Activated CD4-positive, alpha-beta memory T cell treated with anti-CD3 and anti-CD28 coated beads, Interleukin-2, amount 10 ng/mL, durations not matched to agents 7 days and 5 days (primary cell): ENCODE measurements at regions of chr10 and their contacts with region 1.

Region 1: DNA sequence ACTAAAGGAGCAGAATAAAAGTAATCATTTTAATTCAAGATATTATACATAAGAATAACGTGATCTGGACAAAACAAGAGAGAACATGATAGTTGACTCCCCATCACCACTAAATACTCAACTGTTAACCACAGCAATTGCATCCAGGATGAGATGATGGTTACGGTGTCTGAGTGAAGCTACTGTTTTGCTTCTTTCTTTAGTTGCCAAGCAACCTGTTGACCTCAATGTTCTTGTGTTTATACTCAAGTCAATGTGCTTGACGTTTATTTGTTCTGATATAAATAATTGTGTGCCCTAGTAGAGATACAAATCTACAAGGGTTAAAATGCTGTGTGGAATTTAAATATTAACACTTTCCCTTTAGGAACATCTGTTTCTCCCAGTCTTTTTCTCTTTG is 31.4 kb upstream of the MPP7 start:
- DNase-seq: peak; percentile 56
- H3K4me3 Mint-ChIP-seq: peak overlapping the region; percentile 81
- H3K27ac Mint-ChIP-seq: peak overlapping the region; percentile 94
- H3K4me1 Mint-ChIP-seq: peaks cover 52% of the 10 kb centered on the region
- H3K27me3 Mint-ChIP-seq: peaks cover 10% of the 10 kb centered on the region

Region 2: GRCh38 chr10:28179006-28179742 is 155.1 kb before region 1 on chr10:
- CTCF ChIA-PET with region 1: no interaction called
- POLR2A ChIA-PET with region 1: no interaction called
- DNase-seq: peak; percentile 32
- H3K4me3 Mint-ChIP-seq: peak overlapping the region; percentile 77
- H3K27ac Mint-ChIP-seq: peak overlapping the region; percentile 83
- H3K4me1 Mint-ChIP-seq: peaks cover 25% of the 10 kb centered on the region
- H3K27me3 Mint-ChIP-seq: no peaks in the 10 kb centered on the region

Region 3: GRCh38 chr10:28367929-28368484 is 33.7 kb after region 1 on chr10:
- CTCF ChIA-PET with region 1: interaction called, 5 read pairs
- POLR2A ChIA-PET with region 1: interaction called, 100 read pairs
- DNase-seq: peak; percentile 73
- H3K4me3 Mint-ChIP-seq: peak overlapping the region; percentile 41
- H3K27ac Mint-ChIP-seq: peak overlapping the region; percentile 78
- H3K4me1 Mint-ChIP-seq: peaks cover 37% of the 10 kb centered on the region
- H3K27me3 Mint-ChIP-seq: peaks cover 16% of the 10 kb centered on the region

Region 4: GRCh38 chr10:28532383-28533175 is 198.3 kb after region 1 on chr10 and contains the start of gene WAC:
- CTCF ChIA-PET with region 1: no interaction called
- POLR2A ChIA-PET with region 1: interaction called, 11 read pairs
- DNase-seq: peak; percentile 97
- H3K4me3 Mint-ChIP-seq: peak within 1 kb of the TSS; percentile 99
- H3K27ac Mint-ChIP-seq: peak within 1 kb of the TSS; percentile 100
- H3K4me1 Mint-ChIP-seq: peaks cover 58% of the 10 kb centered on the region
- H3K27me3 Mint-ChIP-seq: no peaks in the 10 kb centered on the region
- total RNA-seq, gene WAC: 128 to 132 TPM